ENCODE measurements at regions of chr3 and their contacts with region 1.

Region 1: DNA sequence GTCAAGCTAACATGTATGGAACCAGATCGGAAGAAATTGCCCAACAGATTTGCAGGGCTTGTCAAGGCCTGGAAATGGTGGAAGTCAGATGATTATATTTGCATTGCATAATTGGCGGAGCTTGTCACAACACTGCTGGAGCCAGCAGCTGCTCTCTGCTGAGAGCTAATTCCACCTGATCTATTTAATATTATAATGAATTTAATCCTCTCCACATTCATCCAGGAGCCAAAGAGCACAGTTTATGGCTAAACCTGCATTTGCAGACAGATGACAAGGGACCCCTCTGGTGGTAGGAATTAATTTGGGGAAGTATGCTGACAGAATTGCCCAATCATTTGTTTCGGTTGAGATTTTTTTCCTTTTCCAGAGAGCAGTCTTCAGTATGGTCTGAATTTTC is 730.2 kb downstream of the TUSC7 start:
- DNase-seq: no peak
- H3K4me3 ChIP-seq: no peak overlapping the region
- CTCF ChIP-seq: peak; percentile 42

Region 2: GRCh38 chr3:117427081-117427480 is 12.7 kb before region 1 on chr3:
- CTCF ChIA-PET with region 1: interaction called, 11 read pairs
- POLR2A ChIA-PET with region 1: no interaction called
- DNase-seq: no peak
- H3K4me3 ChIP-seq: no peak overlapping the region
- CTCF ChIP-seq: no peak

Region 3: GRCh38 chr3:117479095-117479494 is 39.3 kb after region 1 on chr3:
- CTCF ChIA-PET with region 1: no interaction called
- POLR2A ChIA-PET with region 1: no interaction called
- DNase-seq: no peak
- H3K4me3 ChIP-seq: no peak overlapping the region
- CTCF ChIP-seq: no peak

Region 4: GRCh38 chr3:117600112-117600511 is 160.3 kb after region 1 on chr3:
- CTCF ChIA-PET with region 1: no interaction called
- POLR2A ChIA-PET with region 1: no interaction called
- DNase-seq: no peak
- H3K4me3 ChIP-seq: no peak overlapping the region
- CTCF ChIP-seq: no peak

Measured in AG04449 (cell line).